Activated CD8-positive, alpha-beta T cell treated with anti-CD3 and anti-CD28 coated beads for 36 hours (primary cell): ENCODE measurements at regions of chr1 and their contacts with region 1.

Region 1: DNA sequence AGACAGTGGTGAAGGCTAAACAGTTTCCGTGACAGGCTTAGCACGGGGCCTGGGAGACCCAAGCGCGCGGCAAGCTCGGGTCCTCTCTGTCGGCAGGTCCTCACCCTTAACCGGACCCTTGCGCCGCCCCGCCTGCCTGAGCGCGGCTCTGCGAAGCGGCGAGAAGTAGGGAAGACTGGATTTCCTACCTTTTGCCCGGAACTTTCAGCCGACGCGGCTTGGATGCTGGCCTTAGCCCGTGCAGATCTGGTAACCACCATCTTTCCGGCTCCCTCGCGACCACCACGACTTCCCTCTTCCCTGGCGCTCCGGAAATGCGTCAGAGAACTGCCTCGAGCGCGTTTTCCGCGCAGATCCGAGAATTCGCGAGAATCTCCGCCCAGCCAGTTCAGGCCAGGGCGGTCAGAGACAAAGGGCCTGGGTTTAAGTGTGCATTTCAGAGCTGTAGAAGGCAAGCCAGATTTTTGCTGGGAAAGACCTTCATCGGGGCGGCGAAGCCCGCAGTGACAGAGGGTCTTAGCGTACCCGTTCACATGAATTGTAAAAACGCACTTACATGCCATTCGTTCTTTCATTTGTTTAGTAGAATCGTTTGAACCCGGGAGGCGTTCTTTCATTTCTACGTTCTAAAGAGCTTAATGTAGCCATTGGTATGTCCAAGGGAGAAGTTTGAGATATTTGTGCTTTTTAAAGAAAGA is at the start of gene DNTTIP2:
- DNase-seq: peak; percentile 94
- ATAC-seq: peak; percentile 91
- H3K4me3 Mint-ChIP-seq: peak within 1 kb of the TSS; percentile 93
- H3K27ac Mint-ChIP-seq: peak within 1 kb of the TSS; percentile 95
- H3K4me1 Mint-ChIP-seq: peaks cover 37% of the 10 kb centered on the region
- H3K27me3 Mint-ChIP-seq: no peaks in the 10 kb centered on the region
- CTCF ChIP-seq: no peak
- total RNA-seq, gene DNTTIP2: 81.7 to 82.2 TPM

Region 2: DNA sequence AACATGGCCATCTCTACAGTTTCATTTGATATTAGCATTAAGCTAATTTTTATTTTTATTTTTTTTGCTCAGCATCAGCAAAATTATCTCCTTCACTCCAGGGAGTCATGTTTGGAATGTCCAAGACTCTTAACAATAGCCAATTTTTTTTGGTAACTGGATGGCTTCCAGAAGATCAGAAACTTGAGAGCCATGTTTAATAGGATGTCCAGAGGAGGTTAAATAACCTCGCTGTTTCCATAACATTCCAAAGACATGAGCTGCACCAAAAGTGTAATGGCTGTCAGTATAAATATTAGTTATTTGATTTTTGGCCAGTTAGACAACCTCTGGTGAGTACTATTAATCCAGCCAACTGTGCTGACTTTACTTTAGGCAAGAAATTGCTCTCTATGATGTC is 80.7 kb before region 1 on chr1:
- CTCF ChIA-PET with region 1: no interaction called
- POLR2A ChIA-PET with region 1: no interaction called
- intact Hi-C with region 1: no loop called
- DNase-seq: no peak
- ATAC-seq: no peak
- H3K4me3 Mint-ChIP-seq: no peak overlapping the region
- H3K27ac Mint-ChIP-seq: no peak overlapping the region
- H3K4me1 Mint-ChIP-seq: no peaks in the 10 kb centered on the region
- H3K27me3 Mint-ChIP-seq: peaks cover 8% of the 10 kb centered on the region
- CTCF ChIP-seq: no peak

Region 3: DNA sequence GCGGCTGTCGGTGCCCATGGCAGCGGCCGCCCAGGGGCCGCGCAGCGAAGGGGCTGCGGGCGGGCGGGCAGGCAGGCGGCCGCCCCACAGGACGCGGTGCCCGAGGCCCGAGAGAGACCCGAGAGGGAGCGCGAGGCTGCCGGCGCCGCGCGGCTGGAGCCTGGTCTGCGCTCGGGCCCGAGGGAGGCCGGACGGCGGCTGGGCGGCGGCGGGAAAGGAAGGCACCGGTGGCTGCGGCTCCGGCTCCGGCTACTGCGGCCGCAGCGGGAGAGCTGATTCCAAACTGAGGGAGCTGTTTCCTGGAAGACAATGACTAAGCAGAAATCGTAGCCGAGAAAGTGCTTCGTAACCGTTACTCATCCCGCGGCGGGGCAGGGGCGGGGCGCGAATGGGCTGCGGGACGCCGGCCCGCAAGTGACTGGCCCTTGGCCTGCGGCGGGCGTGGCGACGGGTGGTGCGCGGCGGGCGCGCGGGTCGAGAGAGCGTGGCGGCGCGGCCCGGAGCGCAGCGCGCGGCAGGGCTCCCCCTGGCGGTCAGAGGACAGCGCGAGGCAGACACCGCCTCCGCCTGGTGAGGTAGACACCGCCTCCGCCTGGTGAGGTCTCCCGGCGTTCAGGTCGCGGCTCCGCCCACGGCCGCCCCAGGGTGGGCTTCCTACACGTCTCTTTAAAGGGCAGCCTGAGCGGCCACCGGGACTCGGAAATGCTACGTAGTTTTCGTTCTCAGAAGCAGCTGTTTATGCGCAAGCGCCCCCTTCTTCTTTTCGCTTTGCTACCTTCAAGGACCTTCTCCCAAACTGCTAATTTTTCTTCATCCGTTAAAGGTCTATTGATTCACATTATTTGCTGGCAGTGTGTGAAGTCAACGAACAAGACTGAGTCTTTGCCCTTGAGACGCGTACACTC is 30.4 kb after region 1 on chr1 and contains the start of gene GCLM:
- CTCF ChIA-PET with region 1: interaction called, 10 read pairs
- POLR2A ChIA-PET with region 1: interaction called, 17 read pairs
- intact Hi-C with region 1: loop called (anchors 2 kb)
- DNase-seq: peak; percentile 96
- ATAC-seq: peak; percentile 89
- H3K4me3 Mint-ChIP-seq: peak within 1 kb of the TSS; percentile 96
- H3K27ac Mint-ChIP-seq: peak within 1 kb of the TSS; percentile 95
- H3K4me1 Mint-ChIP-seq: peaks cover 29% of the 10 kb centered on the region
- H3K27me3 Mint-ChIP-seq: peaks cover 1% of the 10 kb centered on the region
- CTCF ChIP-seq: peak; percentile 85
- total RNA-seq, gene GCLM: 25.3 to 26.4 TPM

Region 4: DNA sequence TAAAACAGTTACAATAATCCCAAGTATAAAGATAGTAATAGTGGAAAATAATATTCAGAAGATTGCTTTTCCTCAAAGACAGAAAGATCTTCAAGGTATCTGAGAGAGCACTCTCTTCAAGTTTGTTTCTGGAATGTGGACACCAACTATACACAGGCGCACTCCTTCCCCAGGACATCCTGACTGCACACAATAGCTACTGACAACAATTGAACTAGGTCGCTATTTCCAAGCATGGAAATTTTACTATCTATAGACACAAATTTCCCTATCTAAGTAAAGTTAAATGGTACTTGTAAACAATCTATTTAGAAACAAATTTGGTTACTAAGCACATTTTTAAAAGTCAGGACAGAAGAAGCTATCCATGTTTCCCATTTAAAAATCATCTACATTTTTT is 339.3 kb after region 1 on chr1:
- CTCF ChIA-PET with region 1: no interaction called
- POLR2A ChIA-PET with region 1: no interaction called
- intact Hi-C with region 1: no loop called
- DNase-seq: no peak
- ATAC-seq: no peak
- H3K4me3 Mint-ChIP-seq: no peak overlapping the region
- H3K27ac Mint-ChIP-seq: no peak overlapping the region
- H3K4me1 Mint-ChIP-seq: no peaks in the 10 kb centered on the region
- H3K27me3 Mint-ChIP-seq: peaks cover 20% of the 10 kb centered on the region
- CTCF ChIP-seq: no peak